Sigmoid colon (tissue), 7 donors: ENCODE measurements at regions of chr11 and their contacts with region 1.

Region 1: GRCh38 chr11:129922674-129923073 is 27.3 kb upstream of the NFRKB start:
- DNase-seq: no peak
- H3K4me3 ChIP-seq: no peak overlapping the region
- H3K27ac ChIP-seq: no peak overlapping the region
- H3K4me1 ChIP-seq: no peaks in the 10 kb centered on the region
- H3K27me3 ChIP-seq: no peaks in the 10 kb centered on the region
- CTCF ChIP-seq: no peak
- EP300 ChIP-seq: no peak
- POLR2A ChIP-seq: no peak

Region 2: GRCh38 chr11:129703846-129704245 is 218.8 kb before region 1 on chr11:
- intact Hi-C with region 1: no loop called
- DNase-seq: no peak
- H3K4me3 ChIP-seq: no peak overlapping the region
- H3K27ac ChIP-seq: no peak overlapping the region
- H3K4me1 ChIP-seq: no peaks in the 10 kb centered on the region
- H3K27me3 ChIP-seq: no peaks in the 10 kb centered on the region
- CTCF ChIP-seq: no peak
- EP300 ChIP-seq: no peak
- POLR2A ChIP-seq: no peak

Region 3: DNA sequence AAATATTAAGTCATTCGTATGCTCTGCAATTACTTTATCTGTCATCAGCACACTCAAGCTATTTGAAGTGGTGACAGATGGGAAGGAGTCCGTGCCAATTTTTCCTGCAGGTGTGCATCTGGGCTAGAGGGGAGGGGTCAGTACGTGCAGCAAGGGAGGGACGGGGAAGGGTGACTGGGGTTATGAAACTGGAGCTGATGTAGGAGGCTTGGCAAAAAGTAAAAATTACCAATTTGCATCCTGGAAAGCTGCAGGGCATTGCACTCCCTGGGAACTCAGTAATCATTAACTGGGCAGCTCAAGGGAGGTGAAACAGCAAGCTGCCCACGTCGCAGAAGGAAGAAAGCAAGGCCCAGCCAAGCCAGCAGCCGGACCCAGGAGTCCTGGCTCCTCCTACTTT is 194.1 kb before region 1 on chr11:
- intact Hi-C with region 1: no loop called
- DNase-seq: no peak
- H3K4me3 ChIP-seq: no peak overlapping the region
- H3K27ac ChIP-seq: no peak overlapping the region
- H3K4me1 ChIP-seq: no peaks in the 10 kb centered on the region
- H3K27me3 ChIP-seq: no peaks in the 10 kb centered on the region
- CTCF ChIP-seq: no peak
- EP300 ChIP-seq: no peak
- POLR2A ChIP-seq: no peak

Region 4: GRCh38 chr11:129950101-129951091 is 27.7 kb after region 1 on chr11:
- intact Hi-C with region 1: no loop called
- DNase-seq: peak; percentile 77
- H3K4me3 ChIP-seq: no peak overlapping the region
- H3K27ac ChIP-seq: peak overlapping the region in 1 of 4 donors; percentile 19
- H3K4me1 ChIP-seq: peaks cover 0 to 8% (median 2%) of the 10 kb centered on the region in 4 donors
- H3K27me3 ChIP-seq: no peaks in the 10 kb centered on the region
- CTCF ChIP-seq: no peak
- EP300 ChIP-seq: no peak
- POLR2A ChIP-seq: no peak

Region 5: GRCh38 chr11:130131961-130132850 is 209.5 kb after region 1 on chr11:
- intact Hi-C with region 1: loop called (anchors 1 kb)
- DNase-seq: no peak
- H3K4me3 ChIP-seq: no peak overlapping the region
- H3K27ac ChIP-seq: no peak overlapping the region
- H3K4me1 ChIP-seq: peaks cover 0 to 9% (median 0%) of the 10 kb centered on the region in 4 donors
- H3K27me3 ChIP-seq: no peaks in the 10 kb centered on the region
- CTCF ChIP-seq: peak; percentile 47 to 83 (median 79)
- EP300 ChIP-seq: no peak
- POLR2A ChIP-seq: no peak